ENCODE measurements at regions of chr15 and their contacts with region 1.

Region 1: GRCh38 chr15:91706322-91707032 is 147.0 kb upstream of the SLCO3A1 start:
- DNase-seq: peak; percentile 75
- H3K4me3 ChIP-seq: no peak overlapping the region
- H3K27ac ChIP-seq: no peak overlapping the region
- H3K4me1 ChIP-seq: peaks cover 13% of the 10 kb centered on the region
- H3K27me3 ChIP-seq: peaks cover 3% of the 10 kb centered on the region
- CTCF ChIP-seq: peak; percentile 99

Region 2: GRCh38 chr15:90895336-90896117 is 811.0 kb before region 1 on chr15:
- CTCF ChIA-PET with region 1: no interaction called
- dilution Hi-C with region 1: no loop called
- in situ Hi-C with region 1: no loop called
- intact Hi-C with region 1: no loop called
- DNase-seq: no peak
- H3K4me3 ChIP-seq: no peak overlapping the region
- H3K27ac ChIP-seq: no peak overlapping the region
- H3K4me1 ChIP-seq: no peaks in the 10 kb centered on the region
- H3K27me3 ChIP-seq: no peaks in the 10 kb centered on the region
- CTCF ChIP-seq: no peak

Region 3: DNA sequence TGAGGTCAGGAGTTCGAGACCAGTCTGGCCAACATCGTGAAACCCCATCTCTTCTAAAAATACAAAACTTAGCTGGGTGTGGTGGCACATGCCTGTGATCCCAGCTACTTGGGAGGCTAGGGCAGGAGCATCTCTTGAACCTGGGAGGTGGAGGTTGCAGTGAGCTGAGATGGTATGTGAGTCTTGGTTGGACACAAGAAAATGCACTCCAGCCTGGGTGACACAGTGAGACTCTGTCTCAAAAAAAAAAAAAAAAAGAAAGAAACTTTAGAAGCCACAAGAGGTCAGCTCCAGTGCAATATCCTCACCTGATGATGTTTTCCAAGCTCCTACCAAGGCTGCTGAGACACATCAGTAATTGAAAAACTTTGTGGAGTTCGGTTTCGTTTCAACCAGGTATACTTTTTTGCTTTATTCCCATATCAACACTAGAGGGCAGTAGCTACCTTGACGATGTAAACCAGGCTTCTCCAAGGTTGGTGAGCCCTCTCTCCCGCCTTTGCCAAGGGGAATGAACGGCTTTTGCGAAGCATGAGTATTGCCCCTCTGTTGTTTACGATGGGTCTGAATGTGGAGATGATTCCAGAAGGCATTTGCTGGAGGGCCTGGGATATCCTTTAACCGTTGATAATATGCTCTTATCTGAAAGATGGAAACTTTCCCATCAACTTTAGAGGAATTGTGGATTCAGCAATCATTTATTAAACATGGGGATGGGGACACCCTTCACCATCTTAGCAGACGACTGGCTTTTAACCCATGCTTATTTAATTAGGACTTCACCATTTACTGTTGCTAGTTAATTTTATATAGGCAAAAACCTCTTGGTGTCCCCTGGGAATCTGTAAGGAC is 403.7 kb before region 1 on chr15:
- CTCF ChIA-PET with region 1: no interaction called
- dilution Hi-C with region 1: no loop called
- in situ Hi-C with region 1: no loop called
- intact Hi-C with region 1: loop called (anchors 5 kb)
- DNase-seq: peak; percentile 57
- H3K4me3 ChIP-seq: no peak overlapping the region
- H3K27ac ChIP-seq: no peak overlapping the region
- H3K4me1 ChIP-seq: no peaks in the 10 kb centered on the region
- H3K27me3 ChIP-seq: peaks cover 3% of the 10 kb centered on the region
- CTCF ChIP-seq: peak; percentile 62 to 79

Region 4: DNA sequence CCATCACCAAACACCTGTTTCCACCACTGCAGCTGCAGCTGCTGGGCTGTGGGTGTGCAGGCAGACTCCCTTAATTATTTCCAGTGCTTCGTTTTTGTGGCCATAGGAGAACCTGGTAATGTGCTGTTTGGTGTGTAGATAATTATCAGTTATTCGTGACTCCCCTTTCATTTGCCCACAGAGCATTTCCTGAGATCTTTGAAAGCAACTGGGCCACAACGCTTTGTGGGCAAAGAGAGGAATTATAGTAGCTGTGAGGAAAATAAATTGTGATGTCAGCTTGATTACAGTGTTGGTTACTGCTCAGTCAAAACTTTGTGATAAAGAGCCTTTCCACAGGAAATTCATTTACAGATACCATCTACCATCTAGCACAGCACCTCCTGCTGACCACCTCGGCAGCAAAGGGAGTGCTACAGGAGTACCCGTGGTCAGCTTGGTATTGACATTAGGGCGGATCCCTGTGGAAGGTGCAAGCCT is 46.3 kb before region 1 on chr15:
- CTCF ChIA-PET with region 1: no interaction called
- dilution Hi-C with region 1: no loop called
- in situ Hi-C with region 1: no loop called
- intact Hi-C with region 1: no loop called
- DNase-seq: no peak
- H3K4me3 ChIP-seq: no peak overlapping the region
- H3K27ac ChIP-seq: no peak overlapping the region
- H3K4me1 ChIP-seq: no peaks in the 10 kb centered on the region
- H3K27me3 ChIP-seq: peaks cover 3% of the 10 kb centered on the region
- CTCF ChIP-seq: no peak

Region 5: GRCh38 chr15:91769894-91770293 is 63.4 kb after region 1 on chr15:
- CTCF ChIA-PET with region 1: no interaction called
- dilution Hi-C with region 1: no loop called
- in situ Hi-C with region 1: no loop called
- intact Hi-C with region 1: loop called (anchors 2 kb)
- DNase-seq: no peak
- H3K4me3 ChIP-seq: no peak overlapping the region
- H3K27ac ChIP-seq: no peak overlapping the region
- H3K4me1 ChIP-seq: no peaks in the 10 kb centered on the region
- H3K27me3 ChIP-seq: no peaks in the 10 kb centered on the region
- CTCF ChIP-seq: no peak

Region 6: GRCh38 chr15:91894606-91895005 is 188.1 kb after region 1 on chr15:
- CTCF ChIA-PET with region 1: no interaction called
- dilution Hi-C with region 1: no loop called
- in situ Hi-C with region 1: no loop called
- intact Hi-C with region 1: loop called (anchors 1 kb)
- DNase-seq: peak; percentile 98
- H3K4me3 ChIP-seq: no peak overlapping the region
- H3K27ac ChIP-seq: peak overlapping the region; percentile 91
- H3K4me1 ChIP-seq: peaks cover 63% of the 10 kb centered on the region
- H3K27me3 ChIP-seq: no peaks in the 10 kb centered on the region
- CTCF ChIP-seq: no peak

Region 7: GRCh38 chr15:91973481-91973880 is 267.0 kb after region 1 on chr15:
- CTCF ChIA-PET with region 1: no interaction called
- dilution Hi-C with region 1: no loop called
- in situ Hi-C with region 1: loop called in 1 of 2 experiments (anchors 25 kb)
- intact Hi-C with region 1: no loop called
- DNase-seq: peak; percentile 82
- H3K4me3 ChIP-seq: no peak overlapping the region
- H3K27ac ChIP-seq: peak overlapping the region; percentile 79
- H3K4me1 ChIP-seq: peaks cover 32% of the 10 kb centered on the region
- H3K27me3 ChIP-seq: no peaks in the 10 kb centered on the region
- CTCF ChIP-seq: peak; percentile 35 to 69

Measured in mammary epithelial cell (primary cell).